ENCODE measurements at regions of chr4 and their contacts with region 1.

Region 1: DNA sequence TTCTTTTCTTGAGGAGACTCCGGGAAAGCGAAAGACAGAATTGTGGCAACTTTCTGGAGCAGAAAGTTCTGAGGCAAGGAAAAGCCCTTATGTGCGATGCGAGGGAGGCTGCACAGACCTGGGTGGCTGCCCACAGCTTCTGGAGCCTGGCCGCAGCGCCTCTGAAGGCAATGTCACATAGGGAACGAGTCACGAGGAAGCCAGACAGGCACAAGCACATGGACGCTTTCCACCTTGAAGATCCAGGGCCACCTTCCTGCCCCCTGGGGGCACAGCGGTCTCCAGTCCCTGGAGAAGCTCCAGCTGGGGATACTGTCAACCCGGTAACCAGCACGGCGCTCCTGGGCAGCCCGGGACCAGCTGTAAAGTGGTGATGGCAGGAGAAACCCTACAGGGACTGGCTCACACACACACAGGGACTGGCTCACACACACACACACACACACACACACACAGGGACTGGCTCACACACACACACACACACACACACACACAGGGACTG is 69.8 kb downstream of the MTNR1A start:
- DNase-seq: peak; percentile 70
- H3K4me3 ChIP-seq: no peak overlapping the region
- H3K27ac ChIP-seq: no peak overlapping the region
- H3K4me1 ChIP-seq: no peaks in the 10 kb centered on the region
- H3K27me3 ChIP-seq: no peaks in the 10 kb centered on the region
- CTCF ChIP-seq: no peak
- POLR2A ChIP-seq: no peak

Region 2: GRCh38 chr4:186366326-186366725 is 119.3 kb before region 1 on chr4:
- intact Hi-C with region 1: no loop called
- DNase-seq: no peak
- H3K4me3 ChIP-seq: no peak overlapping the region
- H3K27ac ChIP-seq: no peak overlapping the region
- H3K4me1 ChIP-seq: no peaks in the 10 kb centered on the region
- H3K27me3 ChIP-seq: no peaks in the 10 kb centered on the region
- CTCF ChIP-seq: no peak
- POLR2A ChIP-seq: no peak

Region 3: GRCh38 chr4:186587416-186588018 is 101.9 kb after region 1 on chr4:
- intact Hi-C with region 1: loop called (anchors 10 kb)
- DNase-seq: peak; percentile 89
- H3K4me3 ChIP-seq: no peak overlapping the region
- H3K27ac ChIP-seq: no peak overlapping the region
- H3K4me1 ChIP-seq: no peaks in the 10 kb centered on the region
- H3K27me3 ChIP-seq: no peaks in the 10 kb centered on the region
- CTCF ChIP-seq: peak; percentile 82 to 89 (median 82)
- POLR2A ChIP-seq: no peak

Region 4: GRCh38 chr4:186617921-186618320 is 132.3 kb after region 1 on chr4:
- intact Hi-C with region 1: no loop called
- DNase-seq: no peak
- H3K4me3 ChIP-seq: no peak overlapping the region
- H3K27ac ChIP-seq: no peak overlapping the region
- H3K4me1 ChIP-seq: no peaks in the 10 kb centered on the region
- H3K27me3 ChIP-seq: no peaks in the 10 kb centered on the region
- CTCF ChIP-seq: no peak
- POLR2A ChIP-seq: no peak

Region 5: DNA sequence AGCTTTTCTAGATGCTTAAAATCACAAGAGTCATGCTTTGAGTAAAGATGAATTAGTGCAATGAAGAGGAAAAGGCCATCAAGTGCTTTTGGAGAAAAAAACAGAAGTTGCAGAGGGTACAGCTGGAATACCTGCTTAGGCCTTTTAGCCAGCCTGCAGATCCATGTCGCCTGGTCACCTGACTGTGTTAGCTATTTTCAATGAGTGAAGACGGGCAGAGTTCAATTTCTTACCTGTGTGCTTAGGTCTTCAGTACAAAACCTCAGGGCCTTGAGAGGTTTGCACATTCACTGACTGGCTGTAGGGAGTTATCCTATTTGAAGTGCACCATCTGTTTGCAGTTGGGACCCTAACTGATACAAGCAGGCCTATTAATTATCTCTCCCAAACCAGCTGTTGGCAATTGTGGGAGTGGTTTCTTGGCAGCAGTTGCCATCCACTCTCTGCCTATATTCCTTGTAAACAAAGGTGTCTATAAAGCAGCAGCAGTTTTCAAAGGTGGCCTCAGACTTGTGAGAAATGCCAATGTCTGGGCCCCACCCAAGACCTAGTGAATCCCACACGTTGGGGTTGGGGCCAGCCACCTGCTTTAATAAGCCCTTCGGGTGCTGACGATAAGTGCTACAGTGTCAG is 254.3 kb after region 1 on chr4:
- intact Hi-C with region 1: no loop called
- DNase-seq: no peak
- H3K4me3 ChIP-seq: no peak overlapping the region
- H3K27ac ChIP-seq: no peak overlapping the region
- H3K4me1 ChIP-seq: no peaks in the 10 kb centered on the region
- H3K27me3 ChIP-seq: no peaks in the 10 kb centered on the region
- CTCF ChIP-seq: no peak
- POLR2A ChIP-seq: no peak

Measured in testis (tissue), 5 donors.